ENCODE measurements at regions of chr11 and their contacts with region 1.

Region 1: DNA sequence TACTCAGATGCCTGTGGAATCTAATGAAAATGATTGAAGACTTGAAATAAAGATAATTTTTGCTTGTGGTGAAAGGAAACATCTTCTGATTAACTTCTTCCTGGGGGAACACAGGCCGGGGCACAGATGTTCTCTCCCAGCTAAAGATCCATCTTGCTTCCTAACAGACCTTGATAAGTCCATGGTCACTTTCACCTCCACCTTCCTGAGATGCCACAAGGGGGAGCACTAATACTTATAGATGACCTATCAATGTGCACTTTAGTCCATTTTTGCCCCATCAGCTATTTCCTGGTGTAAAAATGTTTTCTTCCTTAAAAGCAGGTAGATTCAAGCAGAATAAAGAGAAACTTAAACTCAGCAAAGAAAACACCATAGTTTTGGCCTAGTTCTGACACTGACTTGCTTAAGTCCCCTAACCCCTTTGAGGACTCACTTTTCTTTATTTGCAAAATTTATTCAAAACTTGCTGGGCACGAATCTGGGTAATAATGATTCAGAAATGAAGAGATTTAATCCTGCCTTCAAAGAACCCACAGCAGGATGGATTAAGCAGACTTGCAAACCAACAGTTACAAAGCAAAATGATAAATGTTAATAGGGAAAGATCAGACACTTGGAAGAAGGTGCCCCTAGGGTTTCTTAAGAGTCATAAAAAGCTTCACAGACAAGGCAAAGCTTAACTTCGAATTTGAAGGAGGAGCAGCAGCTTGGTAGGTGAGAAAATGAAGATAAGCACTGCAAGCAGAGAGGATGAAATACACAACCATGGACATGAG is 158.7 kb downstream of the RAB38 start:
- DNase-seq: peak; percentile 84
- H3K4me3 ChIP-seq: no peak overlapping the region
- H3K27ac ChIP-seq: no peak overlapping the region
- H3K4me1 ChIP-seq: no peaks in the 10 kb centered on the region
- H3K27me3 ChIP-seq: no peaks in the 10 kb centered on the region
- CTCF ChIP-seq: peak; percentile 58 to 68
- POLR2A ChIP-seq: no peak

Region 2: DNA sequence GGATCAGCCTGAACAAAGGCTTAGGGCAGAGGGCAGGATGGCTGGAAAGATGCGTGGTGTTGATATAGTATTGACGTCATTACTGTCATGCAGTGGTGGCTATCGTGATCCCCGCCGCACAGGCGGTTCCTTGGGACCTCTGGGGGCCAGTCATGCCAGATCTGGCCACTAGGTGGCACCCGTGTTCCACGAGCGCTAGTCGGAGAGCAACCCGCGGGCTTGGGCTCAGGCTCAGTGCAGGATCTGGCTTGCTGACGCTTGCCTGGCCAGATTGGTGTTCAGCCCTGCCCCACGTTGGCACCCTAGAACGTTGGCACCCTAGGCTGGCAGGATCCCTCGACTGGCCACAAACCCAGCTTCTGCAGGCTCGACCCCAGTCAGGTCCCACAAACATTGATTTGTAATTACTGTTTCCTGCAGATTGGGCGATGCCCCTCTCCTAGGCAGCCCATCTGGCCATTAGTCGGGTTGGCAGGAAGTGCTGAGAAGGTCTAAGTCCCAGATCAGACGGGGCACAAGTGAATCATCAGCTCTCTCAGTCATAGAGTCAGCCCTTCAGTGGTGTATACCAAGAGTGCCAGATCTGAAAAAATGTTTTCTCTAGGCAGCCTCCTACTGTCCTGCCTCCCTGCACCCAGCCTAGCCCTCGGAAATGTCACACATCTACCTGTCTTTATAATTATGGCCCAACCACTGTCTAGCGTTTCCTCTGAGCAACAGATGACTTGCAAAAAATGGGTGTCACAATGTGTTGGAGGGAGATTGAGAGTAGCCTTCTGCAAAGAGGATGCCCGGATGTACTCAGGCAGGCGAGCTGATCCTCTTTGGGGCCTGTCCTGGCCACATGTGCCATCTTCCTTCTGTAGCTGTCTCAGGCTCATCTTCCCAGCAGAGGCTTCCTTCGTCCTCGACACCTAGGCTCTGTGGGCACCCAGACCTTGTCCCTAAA is 663.5 kb before region 1 on chr11:
- CTCF ChIA-PET with region 1: interaction called, 13 read pairs
- POLR2A ChIA-PET with region 1: no interaction called
- dilution Hi-C with region 1: no loop called
- intact Hi-C with region 1: no loop called
- DNase-seq: peak; percentile 89
- H3K4me3 ChIP-seq: no peak overlapping the region
- H3K27ac ChIP-seq: peak overlapping the region; percentile 62
- H3K4me1 ChIP-seq: peaks cover 18% of the 10 kb centered on the region
- H3K27me3 ChIP-seq: no peaks in the 10 kb centered on the region
- CTCF ChIP-seq: peak; percentile 96 to 97
- POLR2A ChIP-seq: no peak

Region 3: GRCh38 chr11:88103337-88104206 is 87.0 kb after region 1 on chr11:
- CTCF ChIA-PET with region 1: interaction called, 21 read pairs
- POLR2A ChIA-PET with region 1: no interaction called
- dilution Hi-C with region 1: no loop called
- intact Hi-C with region 1: no loop called
- DNase-seq: peak; percentile 49
- H3K4me3 ChIP-seq: no peak overlapping the region
- H3K27ac ChIP-seq: no peak overlapping the region
- H3K4me1 ChIP-seq: no peaks in the 10 kb centered on the region
- H3K27me3 ChIP-seq: no peaks in the 10 kb centered on the region
- CTCF ChIP-seq: peak; percentile 60 to 65
- POLR2A ChIP-seq: no peak

Region 4: GRCh38 chr11:88281317-88281712 is 264.7 kb after region 1 on chr11:
- CTCF ChIA-PET with region 1: interaction called, 12 read pairs
- POLR2A ChIA-PET with region 1: no interaction called
- dilution Hi-C with region 1: no loop called
- intact Hi-C with region 1: no loop called
- DNase-seq: no peak
- H3K4me3 ChIP-seq: no peak overlapping the region
- H3K27ac ChIP-seq: no peak overlapping the region
- H3K4me1 ChIP-seq: peaks cover 18% of the 10 kb centered on the region
- H3K27me3 ChIP-seq: no peaks in the 10 kb centered on the region
- CTCF ChIP-seq: no peak
- POLR2A ChIP-seq: no peak

Region 5: GRCh38 chr11:88552377-88553062 is 535.9 kb after region 1 on chr11:
- CTCF ChIA-PET with region 1: interaction called, 42 read pairs
- POLR2A ChIA-PET with region 1: no interaction called
- dilution Hi-C with region 1: no loop called
- intact Hi-C with region 1: no loop called
- DNase-seq: no peak
- H3K4me3 ChIP-seq: no peak overlapping the region
- H3K27ac ChIP-seq: no peak overlapping the region
- H3K4me1 ChIP-seq: peaks cover 30% of the 10 kb centered on the region
- H3K27me3 ChIP-seq: no peaks in the 10 kb centered on the region
- CTCF ChIP-seq: peak; percentile 60 to 63
- POLR2A ChIP-seq: no peak